ENCODE measurements at regions of chr15 and their contacts with region 1.

Region 1: GRCh38 chr15:40044717-40045571 is 6.0 kb upstream of the SRP14 start:
- H3K4me3 Mint-ChIP-seq: peak overlapping the region; percentile 70
- H3K27ac Mint-ChIP-seq: peak overlapping the region; percentile 74
- H3K4me1 Mint-ChIP-seq: peaks cover 61% of the 10 kb centered on the region
- H3K27me3 Mint-ChIP-seq: no peaks in the 10 kb centered on the region

Region 2: GRCh38 chr15:40064221-40064894 is 19.4 kb after region 1 on chr15:
- intact Hi-C with region 1: no loop called
- H3K4me3 Mint-ChIP-seq: no peak overlapping the region
- H3K27ac Mint-ChIP-seq: peak overlapping the region; percentile 8
- H3K4me1 Mint-ChIP-seq: peaks cover 17% of the 10 kb centered on the region
- H3K27me3 Mint-ChIP-seq: no peaks in the 10 kb centered on the region

Region 3: DNA sequence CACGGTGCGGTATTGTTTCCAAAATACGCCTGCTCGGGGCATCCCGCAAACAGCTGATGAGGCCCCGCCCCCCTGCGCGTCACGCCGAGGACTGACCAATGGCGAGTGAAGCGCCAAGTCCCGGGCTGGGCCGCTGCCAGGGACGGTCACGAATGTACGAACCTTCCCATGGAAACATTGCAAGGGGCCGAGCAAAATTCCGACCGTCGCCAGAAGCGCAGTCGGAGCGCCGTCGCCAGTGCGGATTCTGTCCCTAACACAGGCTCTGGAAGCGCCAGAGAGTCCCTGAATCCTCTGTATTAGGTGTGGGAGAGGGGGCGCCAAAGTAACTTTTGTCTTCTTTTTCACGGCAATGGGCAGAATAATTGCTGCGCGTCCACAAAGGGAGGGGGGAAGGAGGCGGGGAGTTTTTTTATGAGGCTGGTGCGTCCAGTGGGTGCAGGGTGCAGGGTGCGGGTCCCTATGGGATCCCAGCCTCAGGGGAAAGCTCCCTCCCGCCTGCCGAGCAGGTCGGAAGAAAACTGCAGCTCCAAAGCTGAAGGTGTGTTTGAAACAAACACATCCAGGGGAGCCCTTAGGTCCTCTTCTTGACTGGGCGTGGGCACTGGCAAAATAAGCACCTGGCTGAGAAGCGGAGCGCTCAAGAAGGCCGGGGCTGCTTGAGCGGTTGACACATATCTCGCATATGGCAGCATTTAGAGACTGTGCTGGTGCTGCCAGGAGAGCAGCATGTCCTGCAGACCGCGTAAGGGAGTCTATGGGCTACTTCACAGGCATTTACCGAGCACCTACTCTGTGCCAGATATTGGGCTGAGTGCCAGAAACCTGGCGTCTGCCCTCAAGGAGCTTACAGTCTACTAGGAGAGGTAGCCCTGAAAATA is 64.2 kb after region 1 on chr15 and contains the start of gene BMF:
- intact Hi-C with region 1: loop called (anchors 2 kb)
- H3K4me3 Mint-ChIP-seq: peak within 1 kb of the TSS; percentile 91
- H3K27ac Mint-ChIP-seq: peak within 1 kb of the TSS; percentile 87
- H3K4me1 Mint-ChIP-seq: peaks cover 52% of the 10 kb centered on the region
- H3K27me3 Mint-ChIP-seq: no peaks in the 10 kb centered on the region